Left ventricle myocardium superior (tissue), 1 donor: ENCODE measurements at regions of chr2 and their contacts with region 1.

Region 1: DNA sequence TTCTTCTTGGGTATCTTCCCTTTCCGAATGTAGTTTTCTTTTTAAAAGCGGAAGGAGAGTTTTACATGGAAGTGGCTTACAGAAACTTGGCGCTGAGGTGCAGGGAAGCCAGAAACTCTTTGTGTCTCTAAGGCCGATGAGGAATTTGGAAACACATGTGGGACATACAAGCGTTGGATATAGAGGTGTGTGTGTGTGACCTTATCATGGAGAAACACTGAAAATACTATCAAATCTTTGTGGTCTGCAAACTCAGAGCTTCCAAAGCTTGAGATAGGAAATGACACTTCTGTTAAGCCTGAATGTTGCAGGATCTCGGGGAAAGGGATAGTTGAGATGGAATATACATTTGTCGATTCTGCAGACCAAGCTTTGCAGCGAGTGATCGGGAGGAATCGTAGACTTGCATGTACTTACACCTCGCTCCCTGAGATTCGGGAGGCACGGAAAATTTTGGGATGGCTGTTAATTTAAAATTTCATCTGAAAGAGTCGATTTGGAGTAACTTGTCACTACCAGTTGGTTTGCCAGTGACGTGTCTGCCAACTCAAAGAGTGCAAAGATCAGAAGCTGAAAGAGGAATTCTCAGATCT is 1.0 kb downstream of the NAB1 start:
- DNase-seq: no peak
- ATAC-seq: no peak

Region 2: DNA sequence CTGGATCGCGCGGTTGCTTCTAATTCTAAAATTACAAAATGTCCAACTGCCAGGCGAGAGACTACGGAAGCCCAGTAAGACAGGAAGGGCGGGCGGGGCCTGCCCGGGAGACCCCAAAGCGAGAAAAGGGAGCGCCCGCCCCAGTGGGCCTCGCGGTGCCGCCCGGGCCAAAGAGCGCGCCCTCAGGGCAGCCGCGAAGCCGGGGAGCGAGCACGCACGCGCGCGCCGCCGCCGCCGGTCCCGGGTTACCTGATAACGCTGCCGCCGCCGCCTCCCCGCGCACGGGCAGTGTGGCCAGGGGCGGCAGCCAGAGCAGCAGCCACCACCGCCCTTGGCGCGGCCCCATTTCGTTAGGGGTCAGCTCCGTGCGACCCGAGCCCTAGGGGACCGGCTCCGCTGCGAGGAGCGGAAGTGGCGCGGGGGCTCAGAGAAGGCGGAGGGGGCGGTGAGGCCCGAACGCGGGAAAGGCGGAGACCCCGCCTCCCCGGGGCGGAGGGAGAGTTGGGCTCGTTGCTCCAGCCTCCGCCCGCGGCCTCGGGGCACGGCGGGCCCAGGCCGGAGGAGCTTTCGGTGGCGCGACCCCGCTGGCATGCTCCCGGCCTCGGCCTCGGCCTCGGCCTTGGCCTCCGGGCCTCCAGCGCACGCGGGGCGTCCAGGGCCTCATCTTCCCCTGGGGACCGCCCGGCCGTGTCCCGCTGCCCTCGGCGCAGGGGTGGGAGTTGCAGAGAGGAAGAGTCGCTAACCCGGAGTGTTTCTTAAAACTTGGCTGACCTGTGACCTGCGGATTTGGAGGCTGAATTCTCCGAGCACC is 115.4 kb before region 1 on chr2 and contains the start of gene NEMP2:
- intact Hi-C with region 1: loop called (anchors 10 kb)
- DNase-seq: peak; percentile 92
- ATAC-seq: peak; percentile 95
- total RNA-seq, gene NEMP2: 2.8 TPM